ENCODE measurements at regions of chr13 and their contacts with region 1.

Region 1: GRCh38 chr13:48233046-48233907 is at the start of gene ITM2B:
- DNase-seq: peak; percentile 49
- H3K4me3 Mint-ChIP-seq: peak within 1 kb of the TSS; percentile 92
- H3K27ac Mint-ChIP-seq: peak within 1 kb of the TSS; percentile 80
- H3K4me1 Mint-ChIP-seq: peaks cover 50% of the 10 kb centered on the region
- H3K27me3 Mint-ChIP-seq: peaks cover 26% of the 10 kb centered on the region
- total RNA-seq, gene ITM2B: 56.2 and 61.2 TPM in 2 replicates

Region 2: GRCh38 chr13:48037346-48038173 is 195.7 kb before region 1 on chr13 and contains the start of gene NUDT15:
- intact Hi-C with region 1: loop called (anchors 1 kb)
- DNase-seq: peak; percentile 94
- H3K4me3 Mint-ChIP-seq: peak within 1 kb of the TSS; percentile 98
- H3K27ac Mint-ChIP-seq: peak within 1 kb of the TSS; percentile 99
- H3K4me1 Mint-ChIP-seq: peaks cover 46% of the 10 kb centered on the region
- H3K27me3 Mint-ChIP-seq: no peaks in the 10 kb centered on the region
- total RNA-seq, gene NUDT15: 15.3 and 16.8 TPM in 2 replicates

Region 3: DNA sequence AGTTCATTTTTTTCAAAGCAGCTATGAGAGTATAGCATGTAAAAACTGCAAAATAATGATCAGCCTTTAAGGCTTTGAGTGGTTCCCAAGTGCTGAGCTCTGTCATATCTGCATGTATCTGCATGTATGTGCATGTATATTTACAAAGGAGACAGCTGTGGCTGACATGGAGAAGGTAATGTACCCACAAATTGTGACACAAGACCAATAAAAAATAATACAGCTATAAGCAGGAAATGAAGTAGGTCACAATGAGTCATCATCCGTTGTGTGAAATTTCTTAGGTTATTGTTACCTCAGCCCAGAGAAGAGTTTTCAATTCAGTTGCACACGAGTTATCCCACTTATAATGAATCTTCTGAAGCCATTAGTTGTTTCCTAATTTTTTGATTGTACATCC is 77.4 kb before region 1 on chr13:
- intact Hi-C with region 1: loop called (anchors 1 kb)
- DNase-seq: peak; percentile 9
- H3K4me3 Mint-ChIP-seq: no peak overlapping the region
- H3K27ac Mint-ChIP-seq: peak overlapping the region; percentile 30
- H3K4me1 Mint-ChIP-seq: peaks cover 73% of the 10 kb centered on the region
- H3K27me3 Mint-ChIP-seq: no peaks in the 10 kb centered on the region

Region 4: DNA sequence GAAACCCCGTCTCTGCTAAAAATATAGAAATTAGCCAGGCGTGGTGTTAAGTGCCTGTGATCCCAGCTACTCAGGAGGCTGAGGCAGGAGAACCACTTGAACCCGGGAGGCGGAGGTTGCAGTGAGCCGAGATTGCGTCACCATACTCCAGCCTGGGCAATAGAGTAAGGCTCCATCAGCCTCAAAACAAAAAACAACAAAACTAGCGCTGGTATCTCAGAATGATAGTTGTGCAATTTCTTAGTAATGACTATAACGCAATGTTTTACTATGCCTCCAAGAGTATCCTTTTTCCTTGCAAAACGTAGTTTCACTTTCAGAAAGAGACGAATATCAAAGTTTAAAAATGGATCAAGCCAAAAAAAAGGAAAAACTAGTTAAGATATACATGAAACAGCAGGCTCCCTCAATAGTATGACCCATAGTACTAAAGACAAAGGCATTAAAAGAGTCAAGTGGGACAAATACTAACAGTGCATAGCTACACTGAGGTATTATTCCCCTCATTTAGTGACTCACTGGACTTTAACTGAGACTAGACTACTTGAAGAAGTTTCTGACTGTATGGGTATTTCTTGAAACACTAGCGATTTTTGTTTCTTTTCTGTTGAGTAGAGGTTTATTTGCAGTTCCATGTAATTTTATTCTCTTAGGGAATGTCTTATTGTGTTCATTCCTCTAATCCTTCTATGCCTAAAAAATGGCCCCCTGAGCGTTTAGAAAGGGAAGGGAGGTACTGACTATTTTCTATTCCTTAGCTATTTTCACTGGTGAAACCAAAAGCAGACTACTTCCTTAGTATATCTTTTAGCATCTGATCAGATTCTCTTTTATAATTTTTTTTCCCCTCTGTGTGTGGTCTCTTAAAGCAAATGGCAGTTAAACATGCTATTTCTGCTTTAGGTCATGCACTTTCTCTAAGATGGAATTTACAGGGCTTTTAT is 10.6 kb before region 1 on chr13:
- intact Hi-C with region 1: loop called (anchors 1 kb)
- DNase-seq: no peak
- H3K4me3 Mint-ChIP-seq: no peak overlapping the region
- H3K27ac Mint-ChIP-seq: no peak overlapping the region
- H3K4me1 Mint-ChIP-seq: peaks cover 37% of the 10 kb centered on the region
- H3K27me3 Mint-ChIP-seq: peaks cover 32% of the 10 kb centered on the region

Region 5: DNA sequence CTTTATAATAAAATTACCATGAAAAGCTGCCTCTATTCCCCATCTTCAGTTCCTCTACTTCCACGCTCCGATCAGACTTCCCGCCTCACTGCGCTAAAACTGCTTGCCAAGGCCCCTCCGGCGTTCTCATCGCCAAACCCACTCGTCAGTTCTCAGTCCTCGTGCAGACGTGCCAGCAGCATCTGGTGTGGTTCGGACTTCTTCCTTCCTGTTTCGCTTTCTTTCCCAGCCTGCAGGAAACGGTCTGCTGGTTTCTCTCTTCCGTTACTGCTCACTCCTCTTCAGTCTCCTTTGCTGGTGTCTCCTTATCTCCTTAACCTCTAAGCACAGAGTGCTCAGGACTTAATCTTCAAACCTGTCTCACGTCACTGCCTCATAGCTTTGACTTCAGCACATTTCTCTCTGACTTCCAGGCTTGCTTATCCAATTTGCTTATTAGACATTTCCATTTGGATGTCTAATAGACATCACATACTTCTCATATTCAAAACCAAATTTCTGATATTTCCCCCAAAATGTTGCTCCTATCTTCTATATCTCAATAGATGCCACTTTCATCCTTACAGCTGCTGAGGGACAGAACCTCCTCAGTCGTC is 259.3 kb after region 1 on chr13:
- intact Hi-C with region 1: loop called (anchors 5 kb)
- DNase-seq: peak; percentile 68
- H3K4me3 Mint-ChIP-seq: no peak overlapping the region
- H3K27ac Mint-ChIP-seq: no peak overlapping the region
- H3K4me1 Mint-ChIP-seq: peaks cover 39% of the 10 kb centered on the region
- H3K27me3 Mint-ChIP-seq: no peaks in the 10 kb centered on the region

Region 6: GRCh38 chr13:48602296-48603016 is 369.2 kb after region 1 on chr13:
- intact Hi-C with region 1: no loop called
- DNase-seq: no peak
- H3K4me3 Mint-ChIP-seq: no peak overlapping the region
- H3K27ac Mint-ChIP-seq: no peak overlapping the region
- H3K4me1 Mint-ChIP-seq: no peaks in the 10 kb centered on the region
- H3K27me3 Mint-ChIP-seq: peaks cover 7% of the 10 kb centered on the region

Region 7: DNA sequence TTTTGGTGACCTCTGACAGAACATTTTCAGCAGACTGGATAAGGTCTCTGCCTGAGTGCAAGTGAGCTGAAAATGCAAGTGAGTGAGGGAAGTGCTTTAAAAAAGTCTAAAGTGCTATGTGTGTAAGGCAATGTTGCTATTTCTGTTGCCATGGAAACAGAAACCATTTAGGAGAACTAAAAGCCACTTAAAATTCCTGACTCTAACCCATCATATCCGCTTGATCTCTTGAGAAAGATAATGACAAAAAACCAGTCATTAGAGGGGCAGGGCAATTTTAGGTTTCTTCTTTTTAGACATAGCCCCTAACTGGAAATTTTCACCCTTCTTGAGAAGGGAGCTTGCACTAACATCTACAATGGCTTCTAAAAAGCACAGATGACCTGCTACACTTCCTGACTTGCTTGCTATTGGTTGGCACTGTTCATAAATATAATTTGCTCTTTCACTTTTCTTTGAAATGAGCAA is 420.2 kb after region 1 on chr13 and contains the start of gene CYSLTR2:
- intact Hi-C with region 1: loop called (anchors 5 kb)
- DNase-seq: peak; percentile 27
- H3K4me3 Mint-ChIP-seq: peak within 1 kb of the TSS; percentile 78
- H3K27ac Mint-ChIP-seq: peak within 1 kb of the TSS; percentile 83
- H3K4me1 Mint-ChIP-seq: peaks cover 26% of the 10 kb centered on the region
- H3K27me3 Mint-ChIP-seq: no peaks in the 10 kb centered on the region
- total RNA-seq, gene CYSLTR2: 0.75 and 0.78 TPM in 2 replicates

Measured in activated T-helper 1 cell treated with anti-CD3 and anti-CD28 coated beads, Interleukin-12 subunit alpha, Interleukin-12 subunit beta, Interleukin-2, Interleukin-4 antibody, amounts not matched to agents 30 ng/mL and 10 ng/mL and 1 ng/mL, durations not matched to agents 14 hours and 24 hours and 36 hours (primary cell).